Activated B cell treated with CpG ODN at 0.5 μM for 24 hours (primary cell): ENCODE measurements at regions of chr6 and their contacts with region 1.

Region 1: GRCh38 chr6:132962936-132963868 is 148.8 kb downstream of the RPS12 start:
- DNase-seq: peak; percentile 19
- ATAC-seq: peak; percentile 69
- H3K4me3 Mint-ChIP-seq: no peak overlapping the region
- H3K27ac Mint-ChIP-seq: no peak overlapping the region
- H3K4me1 Mint-ChIP-seq: no peaks in the 10 kb centered on the region
- H3K27me3 Mint-ChIP-seq: peaks cover 24% of the 10 kb centered on the region
- CTCF ChIP-seq: peak; percentile 56

Region 2: GRCh38 chr6:132750455-132751248 is 212.6 kb before region 1 on chr6:
- CTCF ChIA-PET with region 1: no interaction called
- POLR2A ChIA-PET with region 1: no interaction called
- intact Hi-C with region 1: no loop called
- DNase-seq: no peak
- ATAC-seq: peak; percentile 66
- H3K4me3 Mint-ChIP-seq: peak overlapping the region; percentile 66
- H3K27ac Mint-ChIP-seq: peak overlapping the region; percentile 84
- H3K4me1 Mint-ChIP-seq: peaks cover 42% of the 10 kb centered on the region
- H3K27me3 Mint-ChIP-seq: no peaks in the 10 kb centered on the region
- CTCF ChIP-seq: no peak

Region 3: GRCh38 chr6:132902901-132903300 is 60.3 kb before region 1 on chr6:
- CTCF ChIA-PET with region 1: no interaction called
- POLR2A ChIA-PET with region 1: no interaction called
- intact Hi-C with region 1: no loop called
- DNase-seq: no peak
- ATAC-seq: no peak
- H3K4me3 Mint-ChIP-seq: no peak overlapping the region
- H3K27ac Mint-ChIP-seq: no peak overlapping the region
- H3K4me1 Mint-ChIP-seq: no peaks in the 10 kb centered on the region
- H3K27me3 Mint-ChIP-seq: peaks cover 3% of the 10 kb centered on the region
- CTCF ChIP-seq: no peak

Region 4: DNA sequence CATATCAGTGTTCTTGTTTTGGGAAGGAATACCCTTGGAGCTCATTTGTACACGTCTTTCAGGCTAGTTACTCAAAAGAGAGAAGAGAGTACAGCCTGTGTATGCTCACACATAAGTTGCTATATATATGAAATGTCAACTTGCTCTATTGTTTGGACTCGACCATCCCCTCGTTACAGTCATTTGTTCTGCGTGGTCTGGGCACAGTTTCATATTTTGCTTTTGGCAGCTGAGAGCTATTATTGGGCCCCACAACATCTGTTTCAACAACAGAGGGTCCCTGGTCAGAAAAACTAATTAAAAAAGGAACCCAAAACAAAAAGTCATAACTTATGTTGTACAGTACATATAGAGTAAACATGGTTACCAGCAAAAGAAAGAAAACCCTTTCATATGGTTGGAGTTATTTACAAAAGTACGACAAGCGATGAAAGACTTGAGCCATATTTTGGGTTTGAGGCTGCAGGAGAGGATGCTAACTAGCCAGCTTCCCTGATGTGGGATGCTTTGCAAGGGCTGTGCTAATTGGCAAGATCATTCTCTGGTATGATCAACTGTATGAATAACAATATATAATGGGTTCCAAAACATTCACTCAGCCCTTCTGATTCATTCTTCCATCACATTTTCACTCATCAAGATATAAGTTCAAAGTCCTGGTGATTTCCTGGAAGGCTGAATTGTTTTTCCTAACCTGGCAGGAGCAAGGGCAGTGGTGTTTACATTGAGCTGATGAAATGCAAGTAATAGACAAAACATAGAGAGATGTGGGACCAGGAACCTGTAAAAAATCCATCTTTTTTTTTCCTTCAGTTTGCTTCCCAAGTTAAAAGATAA is 11.0 kb before region 1 on chr6:
- CTCF ChIA-PET with region 1: no interaction called
- POLR2A ChIA-PET with region 1: no interaction called
- intact Hi-C with region 1: no loop called
- DNase-seq: no peak
- ATAC-seq: no peak
- H3K4me3 Mint-ChIP-seq: no peak overlapping the region
- H3K27ac Mint-ChIP-seq: no peak overlapping the region
- H3K4me1 Mint-ChIP-seq: no peaks in the 10 kb centered on the region
- H3K27me3 Mint-ChIP-seq: peaks cover 10% of the 10 kb centered on the region
- CTCF ChIP-seq: no peak

Region 5: DNA sequence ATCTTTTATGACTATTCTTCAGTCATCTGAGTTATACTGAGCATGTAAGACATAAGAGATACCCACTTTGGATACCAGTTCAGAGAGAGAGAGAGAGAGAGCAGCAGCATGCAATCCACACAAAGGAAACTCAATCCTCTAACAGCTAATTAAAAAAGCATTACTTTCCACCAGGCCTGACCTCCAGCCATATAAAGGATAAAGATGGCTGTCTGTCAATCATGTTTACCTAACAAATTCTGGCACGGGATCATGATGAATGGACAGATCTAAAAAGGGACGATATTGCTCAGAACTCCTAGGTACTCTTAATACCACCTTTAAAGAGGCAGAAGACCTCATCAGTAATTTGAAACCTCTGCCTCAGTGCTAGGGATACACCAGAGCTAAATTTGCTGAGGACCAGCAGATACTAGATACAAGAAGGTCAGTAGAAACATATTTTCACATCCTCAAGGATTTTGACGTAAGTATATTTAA is 10.4 kb after region 1 on chr6:
- CTCF ChIA-PET with region 1: interaction called, 14 read pairs
- POLR2A ChIA-PET with region 1: no interaction called
- intact Hi-C with region 1: no loop called
- DNase-seq: no peak
- ATAC-seq: no peak
- H3K4me3 Mint-ChIP-seq: no peak overlapping the region
- H3K27ac Mint-ChIP-seq: no peak overlapping the region
- H3K4me1 Mint-ChIP-seq: no peaks in the 10 kb centered on the region
- H3K27me3 Mint-ChIP-seq: peaks cover 16% of the 10 kb centered on the region
- CTCF ChIP-seq: no peak

Region 6: GRCh38 chr6:133512410-133513016 is 549.3 kb after region 1 on chr6:
- CTCF ChIA-PET with region 1: no interaction called
- POLR2A ChIA-PET with region 1: no interaction called
- intact Hi-C with region 1: loop called (anchors 1 kb)
- DNase-seq: no peak
- ATAC-seq: no peak
- H3K4me3 Mint-ChIP-seq: no peak overlapping the region
- H3K27ac Mint-ChIP-seq: no peak overlapping the region
- H3K4me1 Mint-ChIP-seq: no peaks in the 10 kb centered on the region
- H3K27me3 Mint-ChIP-seq: peaks cover 10% of the 10 kb centered on the region
- CTCF ChIP-seq: no peak

Region 7: DNA sequence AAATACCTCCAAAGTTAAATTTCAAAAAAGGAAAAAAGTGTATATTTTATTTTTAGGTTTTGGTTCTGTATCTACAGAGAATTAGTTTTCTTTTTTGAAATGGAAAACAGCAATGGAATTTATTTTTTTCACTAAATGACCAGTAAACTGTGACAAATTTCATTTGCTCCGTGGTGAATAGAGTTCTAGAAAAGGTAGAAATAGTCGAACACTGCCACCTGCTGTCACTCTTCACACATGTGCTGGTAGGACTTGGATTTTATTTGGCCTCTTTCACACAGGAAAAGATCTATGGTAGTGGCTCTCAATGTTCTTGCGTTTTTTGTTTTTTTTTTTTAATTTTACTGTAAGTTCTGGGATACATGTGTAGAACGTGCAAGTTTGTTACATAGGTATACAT is 590.5 kb after region 1 on chr6:
- CTCF ChIA-PET with region 1: no interaction called
- POLR2A ChIA-PET with region 1: no interaction called
- intact Hi-C with region 1: loop called (anchors 2 kb)
- DNase-seq: no peak
- ATAC-seq: no peak
- H3K4me3 Mint-ChIP-seq: no peak overlapping the region
- H3K27ac Mint-ChIP-seq: no peak overlapping the region
- H3K4me1 Mint-ChIP-seq: no peaks in the 10 kb centered on the region
- H3K27me3 Mint-ChIP-seq: peaks cover 7% of the 10 kb centered on the region
- CTCF ChIP-seq: no peak